Heart right ventricle (tissue), 16 donors: ENCODE measurements at regions of chr17 and their contacts with region 1.

Region 1: DNA sequence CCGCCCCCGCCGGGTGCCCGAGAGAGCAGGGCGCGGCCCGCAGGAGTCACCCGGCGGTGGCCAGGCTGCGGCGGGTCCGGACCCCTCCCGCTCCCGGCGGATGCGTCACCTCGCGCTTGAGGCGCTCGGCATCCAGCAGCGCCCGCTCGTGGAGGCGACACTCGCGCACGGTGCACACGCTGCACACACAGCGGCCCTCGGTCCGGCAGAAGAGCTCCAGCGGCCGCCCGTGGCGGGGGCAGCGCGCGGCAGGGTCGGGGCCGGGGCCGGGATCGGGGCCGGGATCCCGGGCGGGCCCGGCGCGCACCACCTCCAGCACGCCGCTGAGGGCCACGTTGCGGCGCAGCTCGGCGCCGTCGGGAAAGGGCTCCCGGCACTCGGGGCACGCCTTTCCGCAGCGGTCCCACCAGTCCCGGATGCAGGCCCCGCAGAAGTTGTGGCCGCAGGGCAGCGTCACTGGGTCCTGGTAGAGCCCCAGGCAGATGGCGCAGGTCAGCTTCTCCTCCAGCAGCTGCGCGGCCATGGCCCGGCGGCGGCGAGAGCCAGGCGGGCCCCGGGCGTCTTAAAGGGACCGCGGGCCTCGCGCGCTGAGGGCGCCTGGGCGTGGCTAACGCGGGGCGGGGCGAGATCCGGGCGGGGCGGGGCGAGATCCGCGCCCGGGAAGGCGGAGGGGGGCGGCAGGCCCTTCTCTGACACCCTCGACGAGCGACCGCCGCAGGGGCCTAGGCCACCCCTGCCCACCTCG is at the start of gene TRIM65:
- DNase-seq: peak; percentile 85 to 89
- ATAC-seq: peak; percentile 80 to 92 (median 85)
- H3K4me3 ChIP-seq: peak within 1 kb of the TSS; percentile 50 to 80 (median 74)
- H3K27ac ChIP-seq: peak within 1 kb of the TSS; percentile 88 to 99 (median 96)
- H3K4me1 ChIP-seq: peaks cover 16 to 37% (median 27%) of the 10 kb centered on the region in 9 donors
- H3K27me3 ChIP-seq: no peaks in the 10 kb centered on the region
- CTCF ChIP-seq: peak; percentile 19 to 78 (median 51)
- total RNA-seq, gene TRIM65: 5.1 to 12.7 (median 8.9) TPM

Region 2: GRCh38 chr17:75764711-75765421 is 131.7 kb before region 1 on chr17 and contains the start of gene GALK1:
- intact Hi-C with region 1: loop called in 3 of 10 experiments (anchors 5 to 10 kb)
- DNase-seq: peak; percentile 73 to 84
- ATAC-seq: peak; percentile 87 to 94 (median 90)
- H3K4me3 ChIP-seq: peak within 1 kb of the TSS; percentile 33 to 77 (median 71)
- H3K27ac ChIP-seq: peak within 1 kb of the TSS; percentile 81 to 92 (median 85)
- H3K4me1 ChIP-seq: peaks cover 5 to 22% (median 18%) of the 10 kb centered on the region in 9 donors
- H3K27me3 ChIP-seq: no peaks in the 10 kb centered on the region
- CTCF ChIP-seq: peak; percentile 41 to 83 (median 65)
- total RNA-seq, gene GALK1: 5.2 to 26.4 (median 11.3) TPM

Region 3: DNA sequence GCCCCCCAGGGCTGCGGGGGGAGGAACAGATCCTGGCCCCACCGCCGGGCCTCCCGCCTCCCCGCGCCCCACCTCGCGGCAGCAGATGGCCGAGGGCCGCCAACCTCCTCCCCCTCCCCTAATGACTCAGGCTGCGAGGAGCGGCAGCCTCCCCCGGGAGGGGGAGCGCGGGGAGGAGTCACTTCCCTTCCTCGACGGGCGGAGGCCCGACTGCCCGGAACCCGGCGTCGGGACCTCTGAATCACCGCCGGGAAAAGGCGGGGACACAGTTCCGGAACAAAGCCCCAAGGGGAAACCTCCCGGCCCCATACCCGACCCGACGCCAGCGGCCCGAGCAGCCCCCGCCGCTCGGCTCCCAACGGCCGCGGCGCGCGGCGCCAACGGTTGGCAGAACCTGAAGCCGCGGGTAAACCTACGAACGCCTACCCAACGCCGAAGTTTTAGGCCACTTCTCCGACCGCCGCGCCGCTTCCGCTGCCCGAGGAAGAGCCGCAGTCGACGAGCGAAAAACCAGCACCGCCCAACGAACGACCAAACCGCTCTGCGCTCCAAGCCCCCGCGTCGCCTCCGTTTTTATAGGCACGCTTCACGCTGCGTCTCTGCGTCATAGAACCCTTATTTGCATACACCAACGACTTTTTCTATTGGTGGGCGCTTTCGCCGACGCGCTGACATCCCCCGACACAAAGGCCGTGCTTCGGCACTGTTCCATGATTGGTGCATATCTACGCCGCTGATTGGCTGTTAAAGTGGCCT is 117.2 kb before region 1 on chr17:
- intact Hi-C with region 1: loop called in 2 of 10 experiments (anchors 5 kb)
- DNase-seq: peak; percentile 94 to 98
- ATAC-seq: peak; percentile 82 to 87 (median 86)
- H3K4me3 ChIP-seq: peak overlapping the region; percentile 78 to 94 (median 88)
- H3K27ac ChIP-seq: peak overlapping the region; percentile 92 to 99 (median 99)
- H3K4me1 ChIP-seq: peaks cover 9 to 68% (median 52%) of the 10 kb centered on the region in 9 donors
- H3K27me3 ChIP-seq: no peaks in the 10 kb centered on the region
- CTCF ChIP-seq: no peak

Region 4: GRCh38 chr17:75827252-75828115 is 69.1 kb before region 1 on chr17:
- intact Hi-C with region 1: loop called in 1 of 10 experiments (anchors 2 kb)
- DNase-seq: peak; percentile 64 to 79
- ATAC-seq: peak; percentile 59 to 80 (median 69)
- H3K4me3 ChIP-seq: peak overlapping the region in 9 of 10 donors; percentile 11 to 50 (median 41)
- H3K27ac ChIP-seq: peak overlapping the region; percentile 52 to 88 (median 82)
- H3K4me1 ChIP-seq: peaks cover 15 to 41% (median 27%) of the 10 kb centered on the region in 9 donors
- H3K27me3 ChIP-seq: no peaks in the 10 kb centered on the region
- CTCF ChIP-seq: peak; percentile 58 to 82 (median 71)

Region 5: GRCh38 chr17:75845049-75845860 is 51.3 kb before region 1 on chr17:
- intact Hi-C with region 1: loop called in 1 of 10 experiments (anchors 1 kb)
- DNase-seq: peak; percentile 86 to 87
- ATAC-seq: peak; percentile 66 to 81 (median 79)
- H3K4me3 ChIP-seq: peak overlapping the region in 3 of 10 donors; percentile 19 to 64 (median 33)
- H3K27ac ChIP-seq: peak overlapping the region; percentile 65 to 97 (median 88)
- H3K4me1 ChIP-seq: peaks cover 40 to 68% (median 61%) of the 10 kb centered on the region in 9 donors
- H3K27me3 ChIP-seq: no peaks in the 10 kb centered on the region
- CTCF ChIP-seq: peak; percentile 69 to 86 (median 83)

Region 6: GRCh38 chr17:75855310-75856081 is 41.1 kb before region 1 on chr17 and contains the start of gene WBP2:
- intact Hi-C with region 1: loop called in 3 of 10 experiments (anchors 2 to 5 kb)
- DNase-seq: peak; percentile 94 to 99
- ATAC-seq: peak; percentile 90 to 96 (median 93)
- H3K4me3 ChIP-seq: peak within 1 kb of the TSS; percentile 79 to 97 (median 83)
- H3K27ac ChIP-seq: peak within 1 kb of the TSS; percentile 96 to 99 (median 98)
- H3K4me1 ChIP-seq: peaks cover 27 to 76% (median 61%) of the 10 kb centered on the region in 9 donors
- H3K27me3 ChIP-seq: no peaks in the 10 kb centered on the region
- CTCF ChIP-seq: peak; percentile 17 to 77 (median 54)
- total RNA-seq, gene WBP2: 130 to 210 (median 173) TPM

Region 7: DNA sequence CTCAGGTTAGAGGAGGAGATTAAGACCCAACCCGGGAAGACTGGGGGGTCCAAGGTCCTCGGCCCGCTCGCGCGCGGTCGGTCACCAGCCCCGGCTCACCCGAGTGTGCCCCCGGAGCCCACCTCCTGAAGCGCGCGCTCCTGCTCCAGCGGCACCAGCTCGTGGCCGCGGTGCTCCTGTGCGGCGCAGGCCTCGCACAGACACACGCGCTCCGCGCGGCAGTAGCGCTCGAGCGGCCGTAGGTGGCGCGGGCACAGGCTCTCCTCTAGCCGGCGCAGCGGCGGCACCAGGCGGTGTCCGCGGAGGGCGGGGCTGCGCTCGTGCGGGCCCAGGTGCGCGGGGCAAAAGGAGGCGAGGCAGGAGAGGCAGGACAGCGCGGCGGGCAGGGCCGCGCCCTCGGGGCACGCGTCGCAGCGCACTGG is 18.8 kb before region 1 on chr17:
- intact Hi-C with region 1: loop called in 1 of 10 experiments (anchors 1 kb)
- DNase-seq: peak; percentile 66 to 77
- ATAC-seq: peak; percentile 21 to 75 (median 58)
- H3K4me3 ChIP-seq: peak overlapping the region; percentile 58 to 87 (median 72)
- H3K27ac ChIP-seq: peak overlapping the region; percentile 77 to 100 (median 96)
- H3K4me1 ChIP-seq: peaks cover 29 to 52% (median 43%) of the 10 kb centered on the region in 9 donors
- H3K27me3 ChIP-seq: peaks cover 0 to 18% (median 0%) of the 10 kb centered on the region in 7 donors
- CTCF ChIP-seq: peak; percentile 19 to 55 (median 44)